ENCODE measurements at regions of chr9 and their contacts with region 1.

Region 1: DNA sequence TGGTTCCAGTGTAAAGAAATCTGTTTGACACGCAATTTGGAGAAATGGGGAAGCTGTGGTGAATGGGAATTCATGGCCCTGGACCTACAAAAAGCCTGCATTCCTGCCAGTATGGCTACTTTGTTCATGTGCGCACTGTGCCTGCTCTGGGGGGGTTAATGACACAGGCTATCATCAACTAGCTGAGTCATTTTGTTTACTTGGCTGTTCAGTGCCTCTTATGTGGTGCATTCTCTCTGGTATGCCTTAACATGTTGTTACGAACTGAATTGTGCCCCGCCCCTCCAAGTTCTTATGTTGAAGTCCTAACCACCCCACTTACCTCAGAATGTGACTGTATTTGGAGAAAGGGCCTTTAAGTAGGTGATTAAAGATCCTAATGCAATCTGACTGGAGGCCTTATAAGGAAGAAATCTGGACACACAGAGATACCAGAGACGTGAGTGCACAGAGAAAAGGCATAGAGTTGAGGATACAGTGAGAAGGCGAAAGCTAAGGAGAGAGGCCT is 20.4 kb upstream of the UBAP1 start:
- DNase-seq: peak; percentile 84
- H3K4me3 Mint-ChIP-seq: no peak overlapping the region
- H3K27ac Mint-ChIP-seq: peak overlapping the region; percentile 57
- H3K4me1 Mint-ChIP-seq: peaks cover 20% of the 10 kb centered on the region
- H3K27me3 Mint-ChIP-seq: no peaks in the 10 kb centered on the region
- CTCF ChIP-seq: no peak

Region 2: DNA sequence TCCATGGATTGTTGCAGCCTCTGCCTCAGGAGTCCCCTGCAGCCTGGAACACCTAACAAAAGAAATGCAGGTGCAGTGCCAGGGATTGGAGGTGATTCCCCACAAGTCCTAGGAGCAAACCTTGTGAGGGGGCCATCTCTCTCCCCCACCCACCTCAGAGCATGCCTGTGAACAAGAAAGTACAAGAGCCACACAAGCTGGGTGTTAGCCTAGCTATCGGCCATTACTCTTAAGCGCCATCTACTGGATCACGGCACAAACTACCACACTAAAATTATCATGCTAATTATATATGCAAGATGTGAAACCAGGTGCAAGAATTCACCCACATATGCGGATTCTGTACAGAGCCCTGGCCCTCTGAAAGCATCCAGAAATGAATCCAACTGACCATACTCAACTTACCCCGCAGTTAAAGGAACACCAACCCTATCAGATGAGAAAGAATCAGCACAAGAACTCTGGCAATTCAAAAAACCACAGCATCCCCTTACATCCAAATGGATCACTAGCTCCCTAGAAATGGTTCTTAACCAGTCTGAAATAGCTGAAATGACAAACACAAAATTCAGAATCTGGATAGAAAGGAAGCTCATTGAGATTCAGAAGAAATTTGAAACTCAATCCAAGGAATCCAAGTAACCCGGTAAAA is 379.6 kb before region 1 on chr9:
- CTCF ChIA-PET with region 1: no interaction called
- POLR2A ChIA-PET with region 1: no interaction called
- intact Hi-C with region 1: no loop called
- DNase-seq: peak; percentile 79
- H3K4me3 Mint-ChIP-seq: peak overlapping the region; percentile 62
- H3K27ac Mint-ChIP-seq: peak overlapping the region; percentile 27
- H3K4me1 Mint-ChIP-seq: peaks cover 42% of the 10 kb centered on the region
- H3K27me3 Mint-ChIP-seq: no peaks in the 10 kb centered on the region
- CTCF ChIP-seq: peak; percentile 60

Region 3: DNA sequence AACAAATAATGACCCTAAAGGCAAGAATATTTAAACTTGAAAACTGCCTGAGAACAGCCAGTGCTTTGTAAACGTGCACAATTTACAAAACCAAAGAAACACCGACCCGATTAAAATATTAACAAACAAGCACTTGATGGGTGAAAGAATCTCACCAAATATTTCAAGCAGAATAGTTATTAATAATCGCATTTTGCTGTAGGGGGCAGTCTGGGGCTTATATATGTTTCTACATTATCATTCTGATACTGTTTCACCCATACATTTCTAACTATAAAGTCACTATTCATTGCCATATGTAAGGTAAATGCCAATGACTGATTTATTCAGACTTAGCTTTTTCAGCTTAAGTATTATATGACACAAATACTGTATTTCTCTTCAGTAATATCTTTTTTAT is 147.4 kb before region 1 on chr9:
- CTCF ChIA-PET with region 1: no interaction called
- POLR2A ChIA-PET with region 1: no interaction called
- intact Hi-C with region 1: no loop called
- DNase-seq: peak; percentile 22
- H3K4me3 Mint-ChIP-seq: no peak overlapping the region
- H3K27ac Mint-ChIP-seq: no peak overlapping the region
- H3K4me1 Mint-ChIP-seq: no peaks in the 10 kb centered on the region
- H3K27me3 Mint-ChIP-seq: no peaks in the 10 kb centered on the region
- CTCF ChIP-seq: peak; percentile 29

Region 4: GRCh38 chr9:34048923-34049697 is 109.3 kb before region 1 on chr9:
- CTCF ChIA-PET with region 1: interaction called, 4 read pairs
- POLR2A ChIA-PET with region 1: no interaction called
- intact Hi-C with region 1: loop called (anchors 1 kb)
- DNase-seq: peak; percentile 98
- H3K4me3 Mint-ChIP-seq: peak overlapping the region; percentile 89
- H3K27ac Mint-ChIP-seq: peak overlapping the region; percentile 99
- H3K4me1 Mint-ChIP-seq: peaks cover 20% of the 10 kb centered on the region
- H3K27me3 Mint-ChIP-seq: no peaks in the 10 kb centered on the region
- CTCF ChIP-seq: no peak

Region 5: GRCh38 chr9:34222451-34222850 is 64.0 kb after region 1 on chr9:
- CTCF ChIA-PET with region 1: no interaction called
- POLR2A ChIA-PET with region 1: no interaction called
- intact Hi-C with region 1: no loop called
- DNase-seq: no peak
- H3K4me3 Mint-ChIP-seq: no peak overlapping the region
- H3K27ac Mint-ChIP-seq: peak overlapping the region; percentile 61
- H3K4me1 Mint-ChIP-seq: peaks cover 13% of the 10 kb centered on the region
- H3K27me3 Mint-ChIP-seq: no peaks in the 10 kb centered on the region
- CTCF ChIP-seq: no peak